ENCODE measurements at regions of chr10 and their contacts with region 1.

Region 1: DNA sequence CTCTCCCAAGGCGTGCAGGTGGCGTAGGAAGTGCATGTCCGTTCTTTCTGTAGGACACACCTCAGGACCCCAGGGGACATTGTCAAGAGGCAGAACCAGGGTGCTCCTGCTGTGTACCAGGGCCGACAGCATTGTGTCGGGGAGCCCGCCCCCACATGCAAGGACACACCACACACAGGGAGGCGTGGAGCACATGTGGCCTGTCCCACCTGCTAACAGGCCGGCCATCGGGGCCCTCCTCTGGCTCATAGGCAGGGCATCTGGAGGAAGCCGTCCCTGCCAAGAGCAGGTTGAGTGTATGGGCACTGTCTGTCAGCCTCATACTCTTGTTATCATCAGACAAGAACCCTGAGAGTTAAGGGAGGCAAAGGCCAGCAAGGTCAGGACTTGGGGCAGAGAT is 12.7 kb downstream of the RET start:
- DNase-seq: no peak
- ATAC-seq: no peak
- H3K4me3 ChIP-seq: no peak overlapping the region
- H3K4me3 Mint-ChIP-seq: no peak overlapping the region
- H3K27ac ChIP-seq: no peak overlapping the region
- H3K27ac Mint-ChIP-seq: no peak overlapping the region
- H3K4me1 ChIP-seq: no peaks in the 10 kb centered on the region
- H3K4me1 Mint-ChIP-seq: no peaks in the 10 kb centered on the region
- H3K27me3 ChIP-seq: no peaks in the 10 kb centered on the region
- H3K27me3 Mint-ChIP-seq: peaks cover 9% of the 10 kb centered on the region
- CTCF ChIP-seq: no peak

Region 2: DNA sequence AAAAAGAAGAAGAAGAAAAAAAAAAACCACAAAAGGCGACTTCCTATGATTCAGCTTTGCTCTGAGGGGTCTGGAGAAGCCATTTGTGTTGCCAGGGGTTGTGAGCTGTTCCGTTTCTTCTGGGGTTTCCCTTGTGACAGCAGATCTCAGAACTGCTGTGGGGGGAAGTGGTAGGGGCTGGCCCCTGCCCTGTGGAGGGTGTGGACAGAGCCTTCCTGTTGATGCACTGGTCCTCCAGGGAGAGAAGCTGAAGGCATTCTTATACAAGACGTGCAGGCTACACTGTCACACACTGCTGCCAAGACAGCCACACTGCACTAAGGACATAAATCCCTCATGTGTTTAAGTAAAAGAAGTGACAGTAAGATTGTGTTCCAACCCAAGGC is 31.4 kb after region 1 on chr10:
- CTCF ChIA-PET with region 1: no interaction called
- POLR2A ChIA-PET with region 1: no interaction called
- intact Hi-C with region 1: loop called in 1 of 2 experiments (anchors 1 kb)
- DNase-seq: peak in 8 of 9 experiments; percentile 35 to 81 (median 54)
- ATAC-seq: peak; percentile 93
- H3K4me3 ChIP-seq: no peak overlapping the region
- H3K4me3 Mint-ChIP-seq: peak overlapping the region; percentile 60
- H3K27ac ChIP-seq: peak overlapping the region; percentile 10 to 66
- H3K27ac Mint-ChIP-seq: peak overlapping the region; percentile 83
- H3K4me1 ChIP-seq: peaks cover 24% of the 10 kb centered on the region
- H3K4me1 Mint-ChIP-seq: peaks cover 21% of the 10 kb centered on the region
- H3K27me3 ChIP-seq: no peaks in the 10 kb centered on the region
- H3K27me3 Mint-ChIP-seq: no peaks in the 10 kb centered on the region
- CTCF ChIP-seq: no peak

Measured in CD8-positive, alpha-beta T cell (primary cell).